ENCODE measurements at regions of chr11 and their contacts with region 1.

Region 1: GRCh38 chr11:122754553-122755322 is 83.6 kb upstream of the CRTAM start:
- DNase-seq: peak in 8 of 10 donors; percentile 12 to 68 (median 44)
- ATAC-seq: peak; percentile 56 to 58
- H3K4me3 Mint-ChIP-seq: peak overlapping the region in 1 of 10 donors; percentile 9
- H3K27ac Mint-ChIP-seq: peak overlapping the region in 7 of 10 donors; percentile 9 to 87 (median 67)
- H3K4me1 Mint-ChIP-seq: peaks cover 28 to 82% (median 68%) of the 10 kb centered on the region in 4 donors
- H3K27me3 Mint-ChIP-seq: no peaks in the 10 kb centered on the region

Region 2: DNA sequence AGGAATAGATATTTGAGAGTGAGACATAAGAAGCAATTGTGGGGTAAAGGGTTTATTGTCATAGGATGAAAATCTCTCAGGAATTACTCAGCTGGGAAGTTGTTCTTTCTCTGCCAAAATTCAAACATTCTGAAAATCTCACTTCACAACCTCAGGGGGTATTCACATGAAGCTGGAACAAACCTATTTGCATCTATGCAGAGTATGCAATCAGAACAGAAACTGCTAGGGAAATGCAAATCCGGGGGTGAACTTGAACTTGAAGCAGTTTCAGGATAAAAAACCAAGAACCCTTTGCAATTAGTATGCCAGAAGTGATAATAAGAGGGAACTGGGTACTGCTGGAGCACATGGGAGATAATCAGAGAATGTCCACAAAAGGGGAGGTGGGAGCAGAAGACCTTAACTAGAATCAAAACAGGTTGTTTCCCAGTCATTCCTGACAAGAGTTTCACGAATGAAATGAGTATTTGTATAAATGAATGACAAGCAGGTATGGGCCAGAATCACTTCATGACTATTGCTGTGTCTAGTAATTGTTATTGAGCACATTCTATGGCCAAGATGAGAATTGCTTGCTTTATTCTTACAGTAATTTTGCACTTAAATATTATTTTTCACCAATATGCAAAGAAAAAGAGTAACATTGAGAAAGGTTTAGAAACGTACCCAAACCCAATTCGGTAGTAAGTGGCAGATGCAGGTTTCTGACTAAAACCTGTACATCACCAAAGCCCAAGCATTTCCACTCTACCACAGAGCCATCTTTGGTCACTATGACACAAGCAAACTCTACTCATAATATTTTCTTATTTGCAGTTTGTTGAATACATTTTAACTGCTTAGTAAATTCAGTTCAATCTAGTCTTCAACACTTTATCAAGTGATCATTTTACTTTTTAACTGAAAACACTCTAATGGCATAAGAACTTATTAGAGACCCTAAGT is 161.0 kb before region 1 on chr11:
- POLR2A ChIA-PET with region 1: no interaction called
- DNase-seq: no peak
- ATAC-seq: no peak
- H3K4me3 Mint-ChIP-seq: no peak overlapping the region
- H3K27ac Mint-ChIP-seq: no peak overlapping the region
- H3K4me1 Mint-ChIP-seq: no peaks in the 10 kb centered on the region
- H3K27me3 Mint-ChIP-seq: peaks cover 16 to 32% (median 20%) of the 10 kb centered on the region in 5 donors

Region 3: GRCh38 chr11:122628810-122629555 is 125.8 kb before region 1 on chr11:
- POLR2A ChIA-PET with region 1: interaction called, 15 read pairs
- DNase-seq: peak; percentile 42 to 85 (median 64)
- ATAC-seq: peak; percentile 94 to 96
- H3K4me3 Mint-ChIP-seq: peak overlapping the region in 1 of 10 donors; percentile 2
- H3K27ac Mint-ChIP-seq: peak overlapping the region in 1 of 10 donors; percentile 2
- H3K4me1 Mint-ChIP-seq: peaks cover 4 to 17% (median 9%) of the 10 kb centered on the region in 4 donors
- H3K27me3 Mint-ChIP-seq: no peaks in the 10 kb centered on the region

Region 4: DNA sequence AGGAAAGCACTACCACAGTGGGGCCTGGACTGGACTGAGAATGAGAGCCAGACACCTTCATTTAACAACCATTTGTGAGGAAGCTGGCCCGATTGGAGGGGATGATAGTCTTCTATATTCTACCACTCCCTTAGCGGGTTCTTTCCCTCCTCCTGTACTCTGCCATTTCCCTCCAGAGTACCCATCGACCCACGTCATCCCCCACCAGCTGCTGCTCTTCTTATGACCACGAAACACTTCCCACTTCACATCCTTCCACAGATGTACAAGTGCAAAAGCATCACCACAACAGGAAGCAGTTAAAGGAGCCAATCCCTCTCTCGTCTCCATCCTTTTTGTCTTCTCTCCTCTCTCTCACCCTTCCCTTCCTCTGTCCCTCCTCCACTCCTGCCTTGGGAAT is 117.2 kb before region 1 on chr11:
- POLR2A ChIA-PET with region 1: interaction called, 12 read pairs
- DNase-seq: peak in 5 of 10 donors; percentile 5 to 65 (median 50)
- ATAC-seq: peak; percentile 70 to 99
- H3K4me3 Mint-ChIP-seq: no peak overlapping the region
- H3K27ac Mint-ChIP-seq: peak overlapping the region in 9 of 10 donors; percentile 26 to 81 (median 63)
- H3K4me1 Mint-ChIP-seq: peaks cover 5 to 13% (median 9%) of the 10 kb centered on the region in 4 donors
- H3K27me3 Mint-ChIP-seq: no peaks in the 10 kb centered on the region

Region 5: DNA sequence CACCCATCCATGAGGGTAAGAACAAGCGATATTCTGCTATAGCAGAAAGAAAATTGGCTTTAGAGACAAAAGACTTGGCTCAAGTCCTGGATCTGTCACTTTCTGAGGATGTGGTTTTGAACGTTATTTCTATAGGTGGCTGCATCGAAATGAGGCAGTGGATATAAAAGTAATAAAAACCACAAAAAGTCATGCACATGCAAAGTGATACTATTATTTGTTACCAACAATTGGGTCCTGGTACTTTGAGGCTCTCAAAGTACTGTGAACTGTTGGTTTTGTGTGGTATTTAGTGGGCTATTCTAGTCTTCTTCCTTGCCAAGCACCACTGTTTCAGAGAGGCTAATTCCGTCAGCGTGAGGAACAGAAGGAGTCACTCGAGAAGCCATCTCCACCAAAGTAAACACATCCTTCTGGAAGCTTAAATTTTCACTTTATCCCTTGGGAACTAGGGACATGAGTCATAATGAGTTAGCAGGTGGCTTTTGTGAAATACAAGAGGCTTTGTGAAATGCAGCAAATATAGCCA is 86.1 kb before region 1 on chr11:
- POLR2A ChIA-PET with region 1: interaction called, 12 read pairs
- DNase-seq: peak in 4 of 10 donors; percentile 28 to 59 (median 44)
- ATAC-seq: peak; percentile 52 to 80
- H3K4me3 Mint-ChIP-seq: peak overlapping the region in 9 of 10 donors; percentile 19 to 77 (median 56)
- H3K27ac Mint-ChIP-seq: peak overlapping the region; percentile 79 to 95 (median 91)
- H3K4me1 Mint-ChIP-seq: peaks cover 46 to 95% (median 84%) of the 10 kb centered on the region in 4 donors
- H3K27me3 Mint-ChIP-seq: no peaks in the 10 kb centered on the region

Region 6: GRCh38 chr11:122690801-122691548 is 63.8 kb before region 1 on chr11:
- POLR2A ChIA-PET with region 1: interaction called, 144 read pairs
- DNase-seq: peak in 3 of 10 donors; percentile 30 to 37 (median 31)
- ATAC-seq: peak; percentile 61 to 68
- H3K4me3 Mint-ChIP-seq: peak overlapping the region; percentile 37 to 83 (median 80)
- H3K27ac Mint-ChIP-seq: peak overlapping the region; percentile 87 to 96 (median 93)
- H3K4me1 Mint-ChIP-seq: peaks cover 47 to 86% (median 80%) of the 10 kb centered on the region in 4 donors
- H3K27me3 Mint-ChIP-seq: no peaks in the 10 kb centered on the region

Region 7: GRCh38 chr11:122832721-122833470 is 78.2 kb after region 1 on chr11:
- POLR2A ChIA-PET with region 1: no interaction called
- DNase-seq: peak in 1 of 10 donors; percentile 28
- ATAC-seq: peak; percentile 60 to 71
- H3K4me3 Mint-ChIP-seq: peak overlapping the region in 9 of 10 donors; percentile 3 to 72 (median 36)
- H3K27ac Mint-ChIP-seq: peak overlapping the region; percentile 37 to 95 (median 82)
- H3K4me1 Mint-ChIP-seq: peaks cover 25 to 56% (median 40%) of the 10 kb centered on the region in 4 donors
- H3K27me3 Mint-ChIP-seq: no peaks in the 10 kb centered on the region